GM12878 (cell line): ENCODE measurements at regions of chr4 and their contacts with region 1.

Region 1: GRCh38 chr4:53196882-53197771 is 168.7 kb downstream of the SCFD2 start:
- DNase-seq: peak; percentile 44
- ATAC-seq: peak; percentile 85
- H3K4me3 ChIP-seq: no peak overlapping the region
- H3K27ac ChIP-seq: no peak overlapping the region
- H3K4me1 ChIP-seq: no peaks in the 10 kb centered on the region
- H3K27me3 ChIP-seq: no peaks in the 10 kb centered on the region
- CTCF ChIP-seq: peak; percentile 53 to 75 (median 64); a peak in 5 of 6 replicates
- EP300 ChIP-seq: no peak
- POLR2A ChIP-seq: no peak
- RAD21 ChIP-seq: peak; percentile 94

Region 2: GRCh38 chr4:53185869-53186585 is 11.1 kb before region 1 on chr4:
- CTCF ChIA-PET with region 1: interaction called, 11 read pairs
- POLR2A ChIA-PET with region 1: no interaction called
- RAD21 ChIA-PET with region 1: interaction called, 5 read pairs
- SMC1A ChIA-PET with region 1: interaction called, 5 read pairs
- in situ Hi-C with region 1: no loop called
- intact Hi-C with region 1: no loop called
- DNase-seq: no peak
- ATAC-seq: no peak
- H3K4me3 ChIP-seq: no peak overlapping the region
- H3K27ac ChIP-seq: no peak overlapping the region
- H3K4me1 ChIP-seq: no peaks in the 10 kb centered on the region
- H3K27me3 ChIP-seq: no peaks in the 10 kb centered on the region
- CTCF ChIP-seq: no peak
- EP300 ChIP-seq: no peak
- POLR2A ChIP-seq: no peak
- RAD21 ChIP-seq: no peak

Region 3: GRCh38 chr4:53432528-53433424 is 235.6 kb after region 1 on chr4:
- CTCF ChIA-PET with region 1: no interaction called
- POLR2A ChIA-PET with region 1: no interaction called
- RAD21 ChIA-PET with region 1: no interaction called
- SMC1A ChIA-PET with region 1: interaction called, 3 read pairs
- in situ Hi-C with region 1: no loop called
- intact Hi-C with region 1: loop called (anchors 10 kb)
- DNase-seq: no peak
- ATAC-seq: peak; percentile 76
- H3K4me3 ChIP-seq: no peak overlapping the region
- H3K27ac ChIP-seq: no peak overlapping the region
- H3K4me1 ChIP-seq: no peaks in the 10 kb centered on the region
- H3K27me3 ChIP-seq: no peaks in the 10 kb centered on the region
- CTCF ChIP-seq: no peak
- EP300 ChIP-seq: no peak
- POLR2A ChIP-seq: no peak
- RAD21 ChIP-seq: no peak

Region 4: GRCh38 chr4:53804719-53805118 is 607.6 kb after region 1 on chr4:
- CTCF ChIA-PET with region 1: interaction called, 20 read pairs
- POLR2A ChIA-PET with region 1: no interaction called
- RAD21 ChIA-PET with region 1: interaction called, 10 read pairs
- SMC1A ChIA-PET with region 1: interaction called, 14 read pairs
- in situ Hi-C with region 1: loop called (anchors 5 kb)
- intact Hi-C with region 1: loop called (anchors 1 kb)
- DNase-seq: peak; percentile 12
- ATAC-seq: peak; percentile 98
- H3K4me3 ChIP-seq: no peak overlapping the region
- H3K27ac ChIP-seq: no peak overlapping the region
- H3K4me1 ChIP-seq: 0 out of 2 replicates have a peak, but pooled peaks cover 3% of the 10 kb centered on the region
- H3K27me3 ChIP-seq: no peaks in the 10 kb centered on the region
- CTCF ChIP-seq: peak; percentile 65 to 74 (median 72)
- EP300 ChIP-seq: no peak
- POLR2A ChIP-seq: no peak
- RAD21 ChIP-seq: peak; percentile 77

Region 5: GRCh38 chr4:54228056-54228527 is 1031.0 kb after region 1 on chr4:
- CTCF ChIA-PET with region 1: interaction called, 16 read pairs
- POLR2A ChIA-PET with region 1: no interaction called
- RAD21 ChIA-PET with region 1: no interaction called
- SMC1A ChIA-PET with region 1: no interaction called
- in situ Hi-C with region 1: loop called (anchors 5 kb)
- intact Hi-C with region 1: loop called (anchors 2 kb)
- DNase-seq: no peak
- ATAC-seq: peak; percentile 76
- H3K4me3 ChIP-seq: peak overlapping the region; percentile 54; the same call in 1 of the 2 replicates
- H3K27ac ChIP-seq: no peak overlapping the region
- H3K4me1 ChIP-seq: peaks cover 3% of the 10 kb centered on the region; the same call in 1 of the 2 replicates
- H3K27me3 ChIP-seq: peaks cover 31 to 32% of the 10 kb centered on the region in 2 experiments
- CTCF ChIP-seq: peak; percentile 64 to 83 (median 73)
- EP300 ChIP-seq: no peak; a peak in 1 of 4 replicates
- POLR2A ChIP-seq: no peak
- RAD21 ChIP-seq: peak; percentile 60